Activated T-helper 2 cell treated with anti-CD3 and anti-CD28 coated beads, Interferon-gamma antibody, Interleukin-2, Interleukin-4, amounts not matched to agents 10 μg/mL and 5 μg/mL and 100 μg/mL, durations not matched to agents 14 hours and 24 hours and 36 hours (primary cell): ENCODE measurements at regions of chr1 and their contacts with region 1.

Region 1: GRCh38 chr1:28409090-28409489 is 39.5 kb downstream of the PHACTR4 start:
- DNase-seq: no peak
- H3K4me3 Mint-ChIP-seq: no peak overlapping the region
- H3K27ac Mint-ChIP-seq: no peak overlapping the region
- H3K4me1 Mint-ChIP-seq: peaks cover 10% of the 10 kb centered on the region
- H3K27me3 Mint-ChIP-seq: no peaks in the 10 kb centered on the region

Region 2: DNA sequence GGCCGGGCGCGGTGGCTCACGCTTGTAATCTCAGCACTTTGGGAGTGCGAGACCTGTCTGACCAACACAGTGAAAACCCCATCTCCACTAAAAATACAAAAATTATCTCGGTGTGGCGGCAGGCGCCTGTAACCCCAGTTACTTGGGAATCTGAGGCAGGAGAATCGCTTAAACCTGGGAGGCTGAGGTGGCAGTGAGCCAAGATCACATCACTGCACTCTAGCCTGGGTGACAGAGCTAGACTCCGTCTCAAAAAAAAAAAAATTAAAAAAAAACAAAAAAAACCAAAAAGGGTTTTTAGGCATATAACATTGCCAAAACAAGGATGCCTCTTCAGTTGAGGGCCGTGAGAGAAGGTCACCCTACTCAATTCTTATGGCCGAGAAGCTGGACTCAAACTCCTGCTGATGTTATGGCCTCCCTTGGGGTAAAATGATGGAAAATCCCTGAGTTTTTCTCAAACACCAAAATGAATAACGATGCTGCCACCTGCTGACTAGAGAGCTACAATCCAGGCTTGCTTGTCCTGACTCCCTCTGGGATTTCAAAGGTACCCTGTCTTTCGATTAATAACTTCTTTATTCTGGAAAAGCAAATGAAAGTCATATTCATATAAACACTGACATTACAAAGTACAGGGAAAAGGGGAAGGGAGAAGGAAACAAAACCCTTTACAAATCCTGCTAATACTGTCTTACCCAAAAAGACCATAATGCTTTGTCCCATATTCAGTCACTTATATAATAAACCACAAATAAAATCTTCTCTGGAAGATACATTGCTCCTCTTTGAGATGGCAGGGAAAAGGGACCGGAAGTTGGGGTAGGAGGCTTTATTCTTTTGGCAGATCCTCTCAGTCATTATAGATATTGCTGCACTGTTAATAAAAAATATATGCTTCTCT is 193.7 kb after region 1 on chr1:
- intact Hi-C with region 1: loop called (anchors 10 kb)
- DNase-seq: no peak
- H3K4me3 Mint-ChIP-seq: no peak overlapping the region
- H3K27ac Mint-ChIP-seq: no peak overlapping the region
- H3K4me1 Mint-ChIP-seq: peaks cover 16% of the 10 kb centered on the region
- H3K27me3 Mint-ChIP-seq: no peaks in the 10 kb centered on the region

Region 3: DNA sequence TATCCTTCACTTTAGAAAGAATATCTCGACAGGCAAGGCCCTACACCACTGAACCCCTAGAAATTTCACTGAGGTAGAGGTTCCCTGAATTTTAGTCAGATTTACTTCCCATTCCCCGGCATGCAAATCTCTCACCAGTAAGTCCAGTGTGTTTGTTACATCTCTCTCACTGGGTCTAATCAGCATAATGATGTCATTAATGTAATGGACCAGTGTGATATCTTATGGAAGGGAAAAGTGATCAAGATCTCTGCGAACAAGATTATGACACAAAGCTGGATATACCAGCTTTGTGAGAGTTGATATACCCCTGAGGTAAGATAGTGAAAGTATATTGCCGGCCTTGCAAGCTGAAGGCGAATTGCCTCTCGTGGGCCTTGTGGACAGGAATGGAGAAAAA is 247.2 kb after region 1 on chr1:
- intact Hi-C with region 1: no loop called
- DNase-seq: no peak
- H3K4me3 Mint-ChIP-seq: no peak overlapping the region
- H3K27ac Mint-ChIP-seq: no peak overlapping the region
- H3K4me1 Mint-ChIP-seq: no peaks in the 10 kb centered on the region
- H3K27me3 Mint-ChIP-seq: no peaks in the 10 kb centered on the region

Region 4: DNA sequence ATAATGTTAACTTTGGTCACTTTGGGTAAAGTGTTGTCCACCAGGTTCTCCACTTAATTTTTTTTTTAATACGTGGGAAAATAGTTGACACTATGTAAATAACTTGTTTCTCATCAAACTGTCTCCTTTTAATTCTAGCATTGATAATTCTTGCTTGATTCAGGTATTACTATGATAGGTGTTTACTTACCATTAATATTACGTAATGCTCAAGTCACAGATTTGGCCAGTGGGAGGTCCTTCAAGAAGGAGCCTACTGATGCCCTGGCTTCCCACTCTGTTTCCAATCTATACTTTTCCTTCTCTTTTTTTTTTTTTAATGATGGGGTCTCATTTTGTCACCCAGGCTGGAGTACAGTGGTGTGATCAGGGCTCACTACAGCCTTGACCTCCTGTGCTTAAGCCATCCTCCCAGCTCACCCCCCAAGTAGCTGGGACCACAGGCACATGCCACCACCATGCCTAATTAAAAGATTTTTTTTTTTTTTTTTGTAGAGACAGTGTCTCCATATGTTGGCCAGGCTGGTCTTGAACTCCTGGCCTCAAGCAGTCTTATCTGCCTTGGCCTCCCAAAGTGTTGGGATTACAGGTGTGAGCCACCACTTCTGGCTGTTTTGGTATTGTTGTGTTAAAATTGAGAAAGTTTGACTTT is 357.6 kb after region 1 on chr1:
- intact Hi-C with region 1: no loop called
- DNase-seq: no peak
- H3K4me3 Mint-ChIP-seq: no peak overlapping the region
- H3K27ac Mint-ChIP-seq: no peak overlapping the region
- H3K4me1 Mint-ChIP-seq: peaks cover 4% of the 10 kb centered on the region
- H3K27me3 Mint-ChIP-seq: no peaks in the 10 kb centered on the region